Activated naive CD4-positive, alpha-beta T cell treated with anti-CD3 and anti-CD28 coated beads for 36 hours (primary cell): ENCODE measurements at regions of chr6 and their contacts with region 1.

Region 1: DNA sequence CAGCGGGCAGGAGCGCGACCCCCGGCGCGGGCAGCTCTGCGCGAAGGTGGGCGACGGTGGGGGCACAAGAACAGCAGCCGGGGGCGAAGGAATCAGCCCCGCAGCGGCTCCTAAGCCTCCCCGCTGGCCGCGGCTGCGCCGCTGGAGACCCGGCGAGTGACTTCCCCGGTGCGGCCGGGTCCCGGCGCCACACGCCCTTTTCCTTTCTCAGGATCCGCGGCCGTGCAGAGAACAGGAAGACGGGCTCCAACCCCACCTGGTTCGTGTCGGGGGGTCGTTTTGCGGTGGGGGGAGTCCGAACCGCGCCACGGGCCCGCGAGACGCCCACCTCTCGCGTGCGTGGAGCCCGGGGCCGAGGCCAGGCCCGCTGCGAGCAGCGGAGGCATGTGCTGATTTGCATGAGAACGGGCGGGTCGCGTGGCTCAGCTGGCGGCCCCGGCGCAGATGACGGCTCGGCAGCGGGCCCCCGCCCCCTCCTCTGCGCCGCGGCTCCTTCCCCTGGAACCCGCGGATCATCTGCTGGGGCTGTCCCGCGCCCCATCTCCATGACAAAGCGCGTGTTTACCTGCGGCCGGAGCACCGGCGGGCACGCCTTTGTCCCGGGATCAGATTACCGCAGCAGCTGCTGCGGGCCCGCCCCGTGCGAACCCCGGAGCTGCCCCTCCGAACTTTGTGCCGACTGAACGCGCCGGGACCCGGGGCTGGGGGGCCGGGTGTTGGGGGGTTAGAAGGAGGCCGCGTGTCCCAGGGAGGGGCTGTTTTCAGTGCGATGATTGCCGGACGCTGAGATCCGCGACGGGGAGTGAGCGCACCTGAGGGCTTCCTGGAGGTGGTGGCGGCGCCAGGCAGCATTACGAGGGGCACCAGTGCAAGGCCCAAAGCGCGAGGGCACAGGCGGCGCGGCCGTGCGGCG is 4.9 kb upstream of the DLL1 start:
- DNase-seq: peak; percentile 73
- H3K4me3 Mint-ChIP-seq: peak overlapping the region; percentile 68
- H3K27ac Mint-ChIP-seq: no peak overlapping the region
- H3K4me1 Mint-ChIP-seq: peaks cover 33% of the 10 kb centered on the region
- H3K27me3 Mint-ChIP-seq: peaks cover 65% of the 10 kb centered on the region

Region 2: GRCh38 chr6:168895102-168895812 is 1400.5 kb before region 1 on chr6:
- CTCF ChIA-PET with region 1: no interaction called
- intact Hi-C with region 1: loop called (anchors 10 kb)
- DNase-seq: peak; percentile 89
- H3K4me3 Mint-ChIP-seq: no peak overlapping the region
- H3K27ac Mint-ChIP-seq: no peak overlapping the region
- H3K4me1 Mint-ChIP-seq: peaks cover 14% of the 10 kb centered on the region
- H3K27me3 Mint-ChIP-seq: no peaks in the 10 kb centered on the region

Region 3: DNA sequence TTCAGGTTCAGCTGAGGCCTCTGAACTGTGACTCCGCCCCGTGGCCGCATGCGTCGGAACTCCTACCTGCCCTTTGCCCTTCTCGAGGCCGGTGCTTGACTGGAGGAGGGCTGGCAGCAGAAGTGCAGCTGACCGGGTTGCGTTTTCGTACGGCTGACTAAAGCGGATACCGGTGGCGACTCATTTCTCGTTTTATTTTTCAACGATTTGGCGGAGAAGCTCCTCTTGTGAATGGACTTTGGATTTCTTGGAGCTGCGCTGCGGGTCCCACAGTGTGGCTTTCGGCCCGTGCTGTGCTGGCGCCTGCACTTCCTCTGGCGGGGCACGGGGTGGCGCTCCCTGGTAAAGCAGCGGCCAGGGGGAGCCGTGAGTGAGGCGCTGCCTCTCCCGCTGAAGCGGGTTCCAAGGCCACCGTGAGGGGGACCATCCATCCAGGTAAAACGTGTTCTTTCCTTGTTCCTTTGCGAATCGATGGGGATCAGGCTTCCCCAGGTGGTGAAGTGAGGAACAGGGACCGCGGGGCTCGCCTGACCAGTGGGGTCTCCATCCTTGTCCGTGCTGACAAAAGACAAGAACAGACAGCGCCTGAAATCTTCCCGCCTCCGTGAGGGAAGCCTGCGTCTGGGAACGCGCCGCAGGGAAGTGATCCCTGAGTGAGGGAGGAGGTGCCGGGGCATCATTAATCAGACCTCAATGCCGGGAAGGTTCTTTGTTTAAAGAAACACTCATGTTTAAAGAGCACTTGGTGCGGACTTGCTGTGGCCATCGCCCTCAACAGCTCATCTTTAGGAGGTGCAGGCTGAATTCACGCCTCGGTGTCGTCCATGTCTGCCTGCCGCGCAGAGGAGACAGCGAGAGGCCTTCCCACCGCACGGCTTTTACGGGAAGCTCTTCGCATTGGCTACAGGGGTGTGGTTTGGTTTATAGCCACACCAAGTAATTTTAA is 505.5 kb before region 1 on chr6:
- CTCF ChIA-PET with region 1: interaction called, 3 read pairs
- intact Hi-C with region 1: loop called (anchors 1 kb)
- DNase-seq: peak; percentile 80
- H3K4me3 Mint-ChIP-seq: peak overlapping the region; percentile 79
- H3K27ac Mint-ChIP-seq: no peak overlapping the region
- H3K4me1 Mint-ChIP-seq: peaks cover 17% of the 10 kb centered on the region
- H3K27me3 Mint-ChIP-seq: peaks cover 24% of the 10 kb centered on the region

Region 4: GRCh38 chr6:169959136-169960002 is 336.4 kb before region 1 on chr6:
- CTCF ChIA-PET with region 1: no interaction called
- intact Hi-C with region 1: loop called (anchors 2 kb)
- DNase-seq: peak; percentile 79
- H3K4me3 Mint-ChIP-seq: peak overlapping the region; percentile 21
- H3K27ac Mint-ChIP-seq: peak overlapping the region; percentile 68
- H3K4me1 Mint-ChIP-seq: peaks cover 20% of the 10 kb centered on the region
- H3K27me3 Mint-ChIP-seq: peaks cover 5% of the 10 kb centered on the region

Region 5: GRCh38 chr6:170147832-170148708 is 147.7 kb before region 1 on chr6:
- CTCF ChIA-PET with region 1: no interaction called
- intact Hi-C with region 1: loop called (anchors 5 kb)
- DNase-seq: peak; percentile 65
- H3K4me3 Mint-ChIP-seq: peak overlapping the region; percentile 52
- H3K27ac Mint-ChIP-seq: peak overlapping the region; percentile 66
- H3K4me1 Mint-ChIP-seq: peaks cover 39% of the 10 kb centered on the region
- H3K27me3 Mint-ChIP-seq: peaks cover 3% of the 10 kb centered on the region

Region 6: GRCh38 chr6:170243791-170244291 is 51.9 kb before region 1 on chr6:
- CTCF ChIA-PET with region 1: no interaction called
- intact Hi-C with region 1: no loop called
- DNase-seq: no peak
- H3K4me3 Mint-ChIP-seq: no peak overlapping the region
- H3K27ac Mint-ChIP-seq: no peak overlapping the region
- H3K4me1 Mint-ChIP-seq: no peaks in the 10 kb centered on the region
- H3K27me3 Mint-ChIP-seq: peaks cover 1% of the 10 kb centered on the region

Region 7: GRCh38 chr6:170278743-170279094 is 17.0 kb before region 1 on chr6:
- CTCF ChIA-PET with region 1: no interaction called
- intact Hi-C with region 1: no loop called
- DNase-seq: peak; percentile 38
- H3K4me3 Mint-ChIP-seq: no peak overlapping the region
- H3K27ac Mint-ChIP-seq: no peak overlapping the region
- H3K4me1 Mint-ChIP-seq: peaks cover 20% of the 10 kb centered on the region
- H3K27me3 Mint-ChIP-seq: no peaks in the 10 kb centered on the region

Region 8: DNA sequence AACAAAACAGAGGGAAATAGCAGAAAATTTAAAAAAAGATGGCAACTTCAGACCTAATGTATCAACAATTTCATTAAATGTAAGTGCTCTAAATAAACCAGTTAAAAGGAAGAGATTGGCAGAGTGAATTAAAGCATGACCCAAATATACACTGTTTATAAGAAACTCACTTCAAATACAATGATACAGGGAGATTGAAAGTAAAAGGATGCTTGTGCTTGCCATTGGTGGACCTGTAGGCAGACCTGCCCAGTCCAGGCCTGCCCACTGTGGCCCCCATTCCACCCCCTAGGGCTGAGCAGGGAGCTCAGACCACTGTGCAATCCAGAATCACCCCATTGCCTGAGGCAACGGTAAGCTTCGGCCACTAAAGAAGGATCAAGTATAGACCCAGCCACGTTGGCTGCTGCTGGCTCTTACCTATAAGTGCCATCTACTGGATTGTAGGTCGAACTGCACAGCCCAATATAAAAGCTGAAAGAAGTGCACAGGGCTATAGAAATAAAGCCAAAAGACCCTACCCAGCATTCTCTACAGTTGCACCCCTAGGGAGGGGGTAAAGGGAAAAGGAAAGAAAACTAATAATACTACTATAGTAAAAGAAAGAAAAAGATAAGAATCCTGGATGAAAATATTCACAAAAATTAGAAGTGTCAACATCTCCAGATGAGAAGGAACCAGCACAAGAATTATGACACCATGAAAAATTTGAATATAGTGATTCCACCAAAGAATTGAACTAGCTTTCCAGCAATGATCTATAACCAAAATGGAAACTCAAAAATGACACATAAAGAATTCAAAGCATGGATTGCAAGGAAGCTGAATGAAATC is 221.2 kb after region 1 on chr6:
- CTCF ChIA-PET with region 1: interaction called, 4 read pairs
- intact Hi-C with region 1: loop called (anchors 2 kb)
- DNase-seq: peak; percentile 54
- H3K4me3 Mint-ChIP-seq: peak overlapping the region; percentile 28
- H3K27ac Mint-ChIP-seq: no peak overlapping the region
- H3K4me1 Mint-ChIP-seq: no peaks in the 10 kb centered on the region
- H3K27me3 Mint-ChIP-seq: peaks cover 24% of the 10 kb centered on the region